ENCODE measurements at regions of chr9 and their contacts with region 1.

Region 1: GRCh38 chr9:129626079-129626624 is at the start of gene NTMT1:
- DNase-seq: peak; percentile 90
- total RNA-seq, gene NTMT1: 107 and 123 TPM in 2 replicates

Region 2: DNA sequence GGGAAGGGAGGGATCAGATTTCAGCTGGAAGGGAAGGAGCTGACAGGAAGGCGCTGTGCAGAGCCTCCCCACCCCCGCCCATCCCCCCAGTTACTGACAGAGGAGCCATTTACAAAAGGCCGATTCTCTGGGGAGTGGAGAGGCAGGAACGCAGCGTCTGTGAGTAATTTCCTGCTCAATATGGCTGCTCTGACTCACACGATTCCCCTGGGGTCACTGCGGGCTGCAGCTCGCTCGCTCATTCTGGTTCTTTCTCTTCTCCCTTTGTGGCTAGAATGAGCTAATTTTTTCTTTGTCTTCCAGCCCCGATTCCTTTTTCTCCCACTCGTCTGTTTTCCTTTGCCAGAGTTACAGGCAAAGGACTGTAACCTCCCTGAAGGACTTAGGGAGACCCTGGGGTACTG is 486.2 kb before region 1 on chr9:
- in situ Hi-C with region 1: loop called (anchors 10 kb)
- DNase-seq: peak; percentile 95

Region 3: GRCh38 chr9:129712634-129713401 is 86.7 kb after region 1 on chr9:
- in situ Hi-C with region 1: no loop called
- DNase-seq: peak; percentile 26

Region 4: GRCh38 chr9:129776938-129777768 is 151.0 kb after region 1 on chr9:
- in situ Hi-C with region 1: loop called (anchors 5 kb)
- DNase-seq: peak; percentile 76